ENCODE measurements at regions of chr1 and their contacts with region 1.

Region 1: DNA sequence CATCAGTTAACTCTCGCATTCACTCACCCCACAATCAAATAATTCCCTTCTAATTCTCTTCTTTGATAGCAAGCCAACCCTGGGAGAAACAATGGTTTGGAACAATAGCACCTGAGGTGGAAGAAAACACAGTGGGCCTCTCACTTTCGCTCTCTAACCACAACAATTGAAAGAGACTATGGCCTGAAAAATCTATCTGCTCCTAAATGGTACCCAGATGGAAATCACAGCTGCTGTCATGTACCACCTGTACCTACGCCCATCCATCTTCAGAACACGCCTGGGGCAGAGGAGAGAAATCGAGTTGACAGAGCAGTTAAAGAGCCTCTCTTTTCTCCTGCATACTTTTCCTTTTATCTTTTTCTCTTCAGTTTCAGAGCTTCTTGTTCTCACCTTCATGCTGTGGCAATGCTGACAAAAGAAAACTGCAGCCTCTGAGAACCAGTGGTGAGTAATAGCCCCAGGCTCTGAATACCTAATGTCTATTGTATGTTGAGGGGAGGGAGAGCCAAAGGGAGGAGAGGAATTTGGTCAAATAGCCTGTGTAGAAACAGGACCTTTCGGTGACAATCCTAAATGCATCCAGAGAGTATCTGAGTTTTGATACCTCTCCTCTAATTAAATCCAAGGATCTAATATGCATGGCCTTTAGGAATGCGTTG is 57.7 kb downstream of the ZC3H11B start:
- DNase-seq: peak; percentile 97
- ATAC-seq: peak; percentile 83
- H3K4me3 ChIP-seq: peak overlapping the region; percentile 30; the same call in 1 of the 2 replicates
- H3K27ac ChIP-seq: peak overlapping the region; percentile 89
- H3K4me1 ChIP-seq: peaks cover 23% of the 10 kb centered on the region
- H3K27me3 ChIP-seq: no peaks in the 10 kb centered on the region
- CTCF ChIP-seq: no peak

Region 2: GRCh38 chr1:218809625-218810024 is 745.5 kb before region 1 on chr1:
- CTCF ChIA-PET with region 1: no interaction called
- POLR2A ChIA-PET with region 1: no interaction called
- intact Hi-C with region 1: loop called (anchors 10 kb)
- DNase-seq: peak; percentile 19
- ATAC-seq: peak; percentile 71
- H3K4me3 ChIP-seq: no peak overlapping the region
- H3K27ac ChIP-seq: no peak overlapping the region
- H3K4me1 ChIP-seq: peaks cover 20% of the 10 kb centered on the region
- H3K27me3 ChIP-seq: no peaks in the 10 kb centered on the region
- CTCF ChIP-seq: no peak

Region 3: DNA sequence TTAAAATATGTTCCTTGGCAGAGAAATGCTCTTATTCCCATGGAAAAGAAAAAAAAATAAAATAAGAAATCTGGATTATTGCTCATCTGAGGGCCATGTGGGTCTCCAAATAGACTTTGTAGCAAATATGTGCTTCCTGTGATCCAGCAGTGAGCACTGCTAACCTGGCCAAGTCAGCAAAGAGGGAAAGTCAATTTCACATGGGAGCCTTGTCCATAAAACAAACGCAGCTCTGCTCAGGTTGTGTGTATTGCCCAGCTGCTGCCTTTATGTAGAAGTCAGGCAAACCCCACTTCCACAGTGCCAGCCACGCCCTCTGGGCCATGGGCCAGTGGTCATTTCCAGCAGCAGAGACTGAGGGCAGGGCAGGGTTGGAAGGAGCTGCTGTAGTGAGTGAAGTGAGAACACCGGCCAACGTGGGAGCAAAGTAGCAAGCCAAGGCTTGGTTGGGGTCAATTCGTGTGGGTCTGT is 207.2 kb before region 1 on chr1:
- CTCF ChIA-PET with region 1: no interaction called
- POLR2A ChIA-PET with region 1: no interaction called
- intact Hi-C with region 1: no loop called
- DNase-seq: no peak
- ATAC-seq: no peak
- H3K4me3 ChIP-seq: no peak overlapping the region
- H3K27ac ChIP-seq: no peak overlapping the region
- H3K4me1 ChIP-seq: no peaks in the 10 kb centered on the region
- H3K27me3 ChIP-seq: no peaks in the 10 kb centered on the region
- CTCF ChIP-seq: no peak

Region 4: GRCh38 chr1:219422811-219423598 is 132.2 kb before region 1 on chr1:
- CTCF ChIA-PET with region 1: interaction called, 3 read pairs
- POLR2A ChIA-PET with region 1: no interaction called
- intact Hi-C with region 1: loop called (anchors 1 kb)
- DNase-seq: peak; percentile 97
- ATAC-seq: peak; percentile 97
- H3K4me3 ChIP-seq: peak overlapping the region; percentile 11; the same call in 1 of the 2 replicates
- H3K27ac ChIP-seq: peak overlapping the region; percentile 86
- H3K4me1 ChIP-seq: peaks cover 22% of the 10 kb centered on the region
- H3K27me3 ChIP-seq: no peaks in the 10 kb centered on the region
- CTCF ChIP-seq: no peak

Region 5: DNA sequence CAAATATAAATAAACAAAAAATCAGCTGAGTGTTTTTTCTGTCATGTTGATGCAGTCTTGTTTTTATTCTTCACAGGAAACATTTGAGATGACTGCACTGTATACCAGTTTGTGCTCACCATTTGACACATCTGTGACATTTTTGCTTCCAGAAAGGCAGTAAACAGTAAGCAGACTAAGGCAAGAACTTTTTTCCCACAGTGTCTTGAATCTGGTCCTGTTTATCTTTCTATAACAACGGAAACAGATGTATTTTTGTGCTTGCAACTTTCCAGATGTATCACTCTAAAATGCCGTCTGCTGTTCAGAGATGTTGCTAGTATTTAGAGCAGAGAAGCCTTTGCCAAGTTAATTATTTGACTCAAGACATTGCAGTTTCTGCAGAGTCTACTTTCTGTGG is 47.7 kb before region 1 on chr1:
- CTCF ChIA-PET with region 1: no interaction called
- POLR2A ChIA-PET with region 1: interaction called, 3 read pairs
- intact Hi-C with region 1: loop called (anchors 1 kb)
- DNase-seq: no peak
- ATAC-seq: no peak
- H3K4me3 ChIP-seq: no peak overlapping the region
- H3K27ac ChIP-seq: no peak overlapping the region
- H3K4me1 ChIP-seq: peaks cover 31% of the 10 kb centered on the region
- H3K27me3 ChIP-seq: no peaks in the 10 kb centered on the region
- CTCF ChIP-seq: no peak

Region 6: DNA sequence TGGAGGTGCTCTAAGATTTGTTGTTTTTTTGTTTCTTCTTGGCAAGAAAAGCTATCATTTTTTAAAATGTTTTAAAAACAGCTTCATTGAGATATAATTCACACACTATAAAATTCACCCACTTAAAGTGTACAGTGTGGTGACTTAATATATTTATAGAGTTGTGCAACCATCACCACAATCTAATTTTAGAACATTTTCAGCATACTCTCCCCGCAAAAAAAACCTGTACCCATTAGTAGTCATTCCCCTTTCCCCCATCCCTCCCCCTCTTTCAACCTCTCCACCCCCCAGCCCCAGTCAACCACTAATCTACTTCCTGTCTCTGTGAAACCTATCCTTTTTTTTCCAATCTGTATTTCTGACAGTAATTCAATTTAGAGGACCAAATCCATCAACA is 27.1 kb after region 1 on chr1:
- CTCF ChIA-PET with region 1: no interaction called
- POLR2A ChIA-PET with region 1: no interaction called
- intact Hi-C with region 1: loop called (anchors 1 kb)
- DNase-seq: peak; percentile 86
- ATAC-seq: 0 out of 2 replicates have a peak, but pooled peaks have one; percentile 8
- H3K4me3 ChIP-seq: 0 out of 2 replicates have a peak overlapping the region, but pooled peaks have one; percentile 5
- H3K27ac ChIP-seq: peak overlapping the region; percentile 28
- H3K4me1 ChIP-seq: peaks cover 37% of the 10 kb centered on the region
- H3K27me3 ChIP-seq: no peaks in the 10 kb centered on the region
- CTCF ChIP-seq: no peak

Measured in PC-3 (cell line).